ENCODE measurements at regions of chr14 and their contacts with region 1.

Region 1: GRCh38 chr14:72420725-72421474 is 473.0 kb downstream of the DPF3 start:
- DNase-seq: peak; percentile 50
- H3K4me3 ChIP-seq: no peak overlapping the region
- H3K27ac ChIP-seq: no peak overlapping the region
- H3K4me1 ChIP-seq: no peaks in the 10 kb centered on the region
- CTCF ChIP-seq: peak; percentile 97

Region 2: GRCh38 chr14:72023722-72024407 is 397.0 kb before region 1 on chr14:
- CTCF ChIA-PET with region 1: no interaction called
- POLR2A ChIA-PET with region 1: no interaction called
- intact Hi-C with region 1: loop called (anchors 2 kb)
- DNase-seq: peak; percentile 53
- H3K4me3 ChIP-seq: no peak overlapping the region
- H3K27ac ChIP-seq: no peak overlapping the region
- H3K4me1 ChIP-seq: no peaks in the 10 kb centered on the region
- CTCF ChIP-seq: peak; percentile 78

Region 3: GRCh38 chr14:72104011-72104613 is 316.8 kb before region 1 on chr14:
- CTCF ChIA-PET with region 1: no interaction called
- POLR2A ChIA-PET with region 1: no interaction called
- intact Hi-C with region 1: loop called (anchors 10 kb)
- DNase-seq: peak; percentile 19
- H3K4me3 ChIP-seq: no peak overlapping the region
- H3K27ac ChIP-seq: no peak overlapping the region
- H3K4me1 ChIP-seq: no peaks in the 10 kb centered on the region
- CTCF ChIP-seq: peak; percentile 91

Region 4: DNA sequence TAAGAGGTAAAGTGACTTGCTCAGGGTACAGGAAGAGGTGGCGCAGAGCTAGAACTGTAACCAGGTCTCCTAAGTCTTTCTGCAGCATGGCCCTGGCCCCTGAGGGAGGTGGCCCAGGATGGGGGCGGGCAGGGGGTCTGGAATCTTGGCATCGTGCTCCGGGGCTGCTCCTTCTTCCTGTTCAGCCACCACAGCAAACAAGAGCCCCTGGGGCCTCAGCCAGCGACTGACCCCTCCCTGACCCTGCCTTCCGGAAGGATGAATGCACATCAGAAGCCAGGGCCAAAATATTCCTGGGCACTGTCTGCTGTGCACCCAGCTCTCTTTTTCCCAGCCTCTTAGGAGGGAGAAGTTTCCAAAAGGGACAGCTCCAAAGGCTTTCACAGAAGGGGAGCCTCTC is 230.2 kb after region 1 on chr14:
- CTCF ChIA-PET with region 1: no interaction called
- POLR2A ChIA-PET with region 1: no interaction called
- intact Hi-C with region 1: no loop called
- DNase-seq: no peak
- H3K4me3 ChIP-seq: no peak overlapping the region
- H3K27ac ChIP-seq: no peak overlapping the region
- H3K4me1 ChIP-seq: no peaks in the 10 kb centered on the region
- CTCF ChIP-seq: no peak